IMR-90 (cell line): ENCODE measurements at regions of chr1 and their contacts with region 1.

Region 1: DNA sequence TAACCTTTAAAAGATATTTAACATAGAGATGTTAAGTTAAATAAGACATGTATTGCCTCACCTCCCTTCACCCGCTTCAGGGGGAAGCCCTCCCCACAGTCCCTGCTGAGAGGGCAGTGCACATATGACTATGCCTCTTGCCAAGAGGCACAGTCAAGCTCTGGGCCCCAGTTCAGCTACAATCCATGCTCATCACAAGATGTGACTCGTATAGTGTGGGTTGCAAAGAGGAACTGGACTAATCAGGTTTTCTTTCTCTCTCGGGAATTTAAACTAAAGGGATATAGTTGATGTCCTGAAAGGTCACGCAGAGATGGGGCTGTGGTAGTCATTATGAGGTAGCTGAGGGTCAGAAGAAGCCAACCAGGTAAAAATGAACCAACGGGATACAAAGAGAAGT is 35.6 kb downstream of the LYST start:
- DNase-seq: peak; percentile 84
- ATAC-seq: peak; percentile 77
- H3K4me3 ChIP-seq: no peak overlapping the region
- H3K27ac ChIP-seq: no peak overlapping the region
- H3K4me1 ChIP-seq: peaks cover 2% of the 10 kb centered on the region; the same call in 1 of the 2 replicates
- H3K27me3 ChIP-seq: no peaks in the 10 kb centered on the region
- CTCF ChIP-seq: no peak
- POLR2A ChIP-seq: no peak
- RAD21 ChIP-seq: no peak

Region 2: GRCh38 chr1:234866007-234866866 is 964.9 kb before region 1 on chr1:
- CTCF ChIA-PET with region 1: no interaction called
- POLR2A ChIA-PET with region 1: no interaction called
- dilution Hi-C with region 1: no loop called
- in situ Hi-C with region 1: no loop called
- intact Hi-C with region 1: no loop called
- DNase-seq: peak; percentile 90
- ATAC-seq: peak; percentile 84
- H3K4me3 ChIP-seq: no peak overlapping the region
- H3K27ac ChIP-seq: peak overlapping the region; percentile 33
- H3K4me1 ChIP-seq: peaks cover 18% of the 10 kb centered on the region
- H3K27me3 ChIP-seq: no peaks in the 10 kb centered on the region
- CTCF ChIP-seq: no peak
- POLR2A ChIP-seq: no peak
- RAD21 ChIP-seq: no peak; the same call in 1 of the 2 replicates

Region 3: DNA sequence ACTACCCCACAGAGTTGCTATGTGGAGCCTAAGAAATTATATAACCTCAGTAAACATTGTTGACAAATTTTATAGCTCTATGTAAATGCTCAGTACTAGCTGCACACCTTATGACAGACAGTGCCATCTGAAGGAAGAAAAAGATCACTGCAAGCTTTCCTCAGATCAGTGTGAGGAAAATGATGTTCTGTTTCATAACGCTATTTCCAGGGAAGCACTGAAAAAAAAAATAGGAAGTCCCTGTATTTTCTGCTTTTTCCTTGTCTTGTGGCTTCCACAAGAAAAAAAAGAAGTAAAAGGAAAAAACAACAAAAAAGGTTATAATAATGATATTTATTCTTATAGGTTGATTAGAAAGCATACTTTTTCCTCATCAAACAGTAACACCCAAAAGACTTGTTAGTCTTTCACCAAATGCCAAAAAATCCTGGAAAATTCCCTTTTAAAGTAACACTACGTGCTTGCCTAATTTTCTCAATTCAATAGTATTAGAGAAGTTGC is 12.4 kb after region 1 on chr1:
- CTCF ChIA-PET with region 1: interaction called, 14 read pairs
- POLR2A ChIA-PET with region 1: no interaction called
- dilution Hi-C with region 1: no loop called
- in situ Hi-C with region 1: no loop called
- intact Hi-C with region 1: no loop called
- DNase-seq: peak; percentile 68
- ATAC-seq: peak; percentile 96
- H3K4me3 ChIP-seq: no peak overlapping the region
- H3K27ac ChIP-seq: no peak overlapping the region
- H3K4me1 ChIP-seq: no peaks in the 10 kb centered on the region; the same call in 1 of the 2 replicates
- H3K27me3 ChIP-seq: no peaks in the 10 kb centered on the region
- CTCF ChIP-seq: peak; percentile 64
- POLR2A ChIP-seq: no peak
- RAD21 ChIP-seq: peak; percentile 72

Region 4: GRCh38 chr1:235902638-235903542 is 71.7 kb after region 1 on chr1:
- CTCF ChIA-PET with region 1: no interaction called
- POLR2A ChIA-PET with region 1: no interaction called
- dilution Hi-C with region 1: no loop called
- in situ Hi-C with region 1: no loop called
- intact Hi-C with region 1: loop called (anchors 5 kb)
- DNase-seq: peak; percentile 44
- ATAC-seq: no peak
- H3K4me3 ChIP-seq: no peak overlapping the region
- H3K27ac ChIP-seq: no peak overlapping the region
- H3K4me1 ChIP-seq: peaks cover 8% of the 10 kb centered on the region
- H3K27me3 ChIP-seq: peaks cover 14% of the 10 kb centered on the region
- CTCF ChIP-seq: no peak
- POLR2A ChIP-seq: no peak
- RAD21 ChIP-seq: no peak